ENCODE measurements at regions of chr20 and their contacts with region 1.

Region 1: GRCh38 chr20:956330-956951 is 40.3 kb upstream of the ANGPT4 start:
- DNase-seq: peak; percentile 83
- ATAC-seq: peak; percentile 83
- H3K4me3 ChIP-seq: no peak overlapping the region
- H3K27ac ChIP-seq: no peak overlapping the region
- H3K4me1 ChIP-seq: no peaks in the 10 kb centered on the region
- H3K27me3 ChIP-seq: peaks cover 35% of the 10 kb centered on the region
- CTCF ChIP-seq: peak; percentile 100

Region 2: GRCh38 chr20:872855-873521 is 83.5 kb before region 1 on chr20:
- CTCF ChIA-PET with region 1: no interaction called
- POLR2A ChIA-PET with region 1: no interaction called
- intact Hi-C with region 1: no loop called
- DNase-seq: no peak
- ATAC-seq: no peak
- H3K4me3 ChIP-seq: no peak overlapping the region
- H3K27ac ChIP-seq: no peak overlapping the region
- H3K4me1 ChIP-seq: no peaks in the 10 kb centered on the region
- H3K27me3 ChIP-seq: peaks cover 11% of the 10 kb centered on the region
- CTCF ChIP-seq: no peak

Region 3: DNA sequence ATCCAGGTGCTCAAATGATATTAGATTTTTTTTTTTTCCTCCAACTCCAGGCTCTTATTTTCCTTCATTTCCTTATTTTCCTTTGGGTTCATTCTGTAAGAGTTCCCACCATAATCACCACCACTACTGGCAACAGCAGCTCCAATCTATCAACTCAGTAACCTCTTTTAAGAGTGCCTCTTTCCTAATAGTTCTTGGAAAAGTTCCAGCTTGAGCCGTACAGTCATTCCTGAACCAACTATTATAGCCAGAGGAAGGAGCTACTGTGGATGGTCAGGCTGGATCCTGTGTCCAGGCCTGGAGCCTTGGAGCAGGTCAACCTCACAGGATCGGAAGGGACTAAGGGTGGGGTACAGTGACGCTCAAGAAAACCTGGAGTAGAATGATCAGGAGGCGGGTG is 36.1 kb before region 1 on chr20:
- CTCF ChIA-PET with region 1: no interaction called
- POLR2A ChIA-PET with region 1: no interaction called
- intact Hi-C with region 1: no loop called
- DNase-seq: no peak
- ATAC-seq: no peak
- H3K4me3 ChIP-seq: no peak overlapping the region
- H3K27ac ChIP-seq: no peak overlapping the region
- H3K4me1 ChIP-seq: no peaks in the 10 kb centered on the region
- H3K27me3 ChIP-seq: peaks cover 40% of the 10 kb centered on the region
- CTCF ChIP-seq: no peak

Region 4: DNA sequence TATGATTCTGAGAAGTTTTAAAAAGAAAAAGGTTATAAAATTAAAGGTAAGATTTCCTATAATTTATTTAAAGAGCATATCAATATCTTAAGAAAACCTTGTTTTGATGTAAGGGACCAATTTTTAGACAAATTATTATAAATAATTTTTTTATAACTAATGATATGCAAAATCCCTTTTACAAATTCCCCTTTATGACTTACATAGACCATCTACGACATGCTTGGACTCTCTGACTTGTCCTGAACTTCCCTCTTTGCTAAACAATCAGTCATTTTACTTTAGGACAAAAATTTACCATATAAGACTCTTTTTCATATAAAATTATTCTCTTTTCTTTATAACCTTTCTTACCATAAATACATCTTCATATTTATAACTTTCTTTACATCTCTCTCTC is 25.0 kb before region 1 on chr20:
- CTCF ChIA-PET with region 1: no interaction called
- POLR2A ChIA-PET with region 1: no interaction called
- intact Hi-C with region 1: no loop called
- DNase-seq: peak; percentile 29
- ATAC-seq: no peak
- H3K4me3 ChIP-seq: no peak overlapping the region
- H3K27ac ChIP-seq: no peak overlapping the region
- H3K4me1 ChIP-seq: no peaks in the 10 kb centered on the region
- H3K27me3 ChIP-seq: peaks cover 26% of the 10 kb centered on the region
- CTCF ChIP-seq: no peak

Region 5: DNA sequence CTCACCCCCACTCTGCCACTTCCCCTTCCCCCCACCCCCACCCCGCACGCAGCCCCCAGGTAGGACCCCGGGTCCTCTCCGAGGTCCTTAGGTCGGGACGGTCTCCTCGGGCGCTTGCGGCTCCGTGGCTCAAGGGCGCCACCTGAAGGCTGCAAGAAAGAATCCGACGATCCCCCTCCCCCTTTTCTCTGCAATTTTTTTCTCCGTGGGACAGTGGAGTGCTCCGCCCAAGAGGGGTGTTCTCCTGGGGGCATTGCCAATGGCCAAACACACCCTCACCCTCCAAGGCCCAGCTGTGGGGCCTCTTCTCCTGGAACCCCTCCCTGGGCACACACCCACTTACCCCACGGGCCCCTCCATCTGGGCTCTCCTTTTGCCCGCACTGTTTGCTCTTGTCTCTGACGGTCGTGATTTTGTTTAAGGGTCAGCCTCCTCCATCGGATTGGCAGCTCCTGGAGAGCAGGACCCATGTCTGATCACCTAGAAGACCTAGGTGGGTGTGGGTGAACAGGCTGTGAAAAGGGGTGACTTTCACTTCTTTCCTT is 229.4 kb after region 1 on chr20:
- CTCF ChIA-PET with region 1: no interaction called
- POLR2A ChIA-PET with region 1: no interaction called
- intact Hi-C with region 1: loop called (anchors 10 kb)
- DNase-seq: peak; percentile 71
- ATAC-seq: peak; percentile 73
- H3K4me3 ChIP-seq: peak overlapping the region; percentile 25; the same call in 1 of the 2 replicates
- H3K27ac ChIP-seq: no peak overlapping the region
- H3K4me1 ChIP-seq: peaks cover 4% of the 10 kb centered on the region; the same call in 1 of the 2 replicates
- H3K27me3 ChIP-seq: peaks cover 24% of the 10 kb centered on the region
- CTCF ChIP-seq: peak; percentile 76

Region 6: DNA sequence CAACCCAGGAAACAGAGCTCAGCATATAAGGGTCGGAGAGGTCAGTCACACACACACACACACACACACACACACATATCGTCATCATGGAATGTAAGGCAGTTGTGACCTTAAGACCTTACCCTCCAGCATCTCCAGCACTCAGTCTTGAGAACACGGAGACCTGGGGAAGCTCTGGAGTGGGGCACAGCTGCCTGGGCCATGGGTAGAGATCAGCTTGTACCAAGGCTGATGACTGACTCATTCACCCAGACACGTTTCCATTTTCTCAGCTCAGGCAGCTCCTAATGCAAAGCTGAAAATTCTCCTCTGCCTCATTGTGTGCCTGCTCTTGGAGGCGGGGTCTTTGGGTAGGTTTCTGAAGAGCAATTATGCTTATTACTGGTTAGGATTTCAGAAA is 1075.7 kb after region 1 on chr20:
- CTCF ChIA-PET with region 1: interaction called, 12 read pairs
- POLR2A ChIA-PET with region 1: no interaction called
- intact Hi-C with region 1: no loop called
- DNase-seq: no peak
- ATAC-seq: no peak
- H3K4me3 ChIP-seq: no peak overlapping the region
- H3K27ac ChIP-seq: no peak overlapping the region
- H3K4me1 ChIP-seq: no peaks in the 10 kb centered on the region
- H3K27me3 ChIP-seq: peaks cover 70% of the 10 kb centered on the region
- CTCF ChIP-seq: no peak

Measured in PC-3 (cell line).